ENCODE measurements at regions of chr6 and their contacts with region 1.

Region 1: GRCh38 chr6:96450082-96450769 is 71.4 kb upstream of the UFL1 start:
- DNase-seq: no peak
- ATAC-seq: no peak
- H3K4me3 Mint-ChIP-seq: no peak overlapping the region
- H3K27ac Mint-ChIP-seq: no peak overlapping the region
- H3K4me1 Mint-ChIP-seq: no peaks in the 10 kb centered on the region
- H3K27me3 Mint-ChIP-seq: no peaks in the 10 kb centered on the region

Region 2: GRCh38 chr6:96157018-96157565 is 293.1 kb before region 1 on chr6:
- CTCF ChIA-PET with region 1: no interaction called
- POLR2A ChIA-PET with region 1: no interaction called
- intact Hi-C with region 1: loop called in 1 of 2 experiments (anchors 10 kb)
- DNase-seq: no peak
- ATAC-seq: peak; percentile 23
- H3K4me3 Mint-ChIP-seq: no peak overlapping the region
- H3K27ac Mint-ChIP-seq: no peak overlapping the region
- H3K4me1 Mint-ChIP-seq: no peaks in the 10 kb centered on the region
- H3K27me3 Mint-ChIP-seq: no peaks in the 10 kb centered on the region

Region 3: DNA sequence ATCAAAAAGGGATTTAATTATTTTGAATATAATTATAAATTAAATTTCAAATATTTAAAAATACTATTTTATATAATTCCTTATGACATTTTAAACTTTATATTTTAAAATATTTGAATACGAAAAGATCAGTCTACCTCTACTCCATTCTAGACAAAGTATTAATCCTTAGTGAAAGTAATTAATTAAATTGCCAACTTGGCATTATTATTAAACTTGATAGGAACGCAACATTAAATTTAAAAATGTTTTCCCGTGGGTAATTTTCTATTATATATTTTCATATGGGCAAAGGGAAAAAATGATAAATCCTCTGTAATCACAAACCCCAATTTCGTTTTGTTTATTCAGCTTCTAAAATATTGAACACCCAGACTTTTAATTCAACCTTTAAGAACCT is 104.3 kb after region 1 on chr6:
- CTCF ChIA-PET with region 1: no interaction called
- POLR2A ChIA-PET with region 1: no interaction called
- intact Hi-C with region 1: no loop called
- DNase-seq: no peak
- ATAC-seq: no peak
- H3K4me3 Mint-ChIP-seq: no peak overlapping the region
- H3K27ac Mint-ChIP-seq: no peak overlapping the region
- H3K4me1 Mint-ChIP-seq: no peaks in the 10 kb centered on the region
- H3K27me3 Mint-ChIP-seq: no peaks in the 10 kb centered on the region

Measured in activated CD4-positive, alpha-beta T cell treated with anti-CD3 and anti-CD28 coated beads for 36 hours (primary cell).